ENCODE measurements at regions of chr14 and their contacts with region 1.

Region 1: DNA sequence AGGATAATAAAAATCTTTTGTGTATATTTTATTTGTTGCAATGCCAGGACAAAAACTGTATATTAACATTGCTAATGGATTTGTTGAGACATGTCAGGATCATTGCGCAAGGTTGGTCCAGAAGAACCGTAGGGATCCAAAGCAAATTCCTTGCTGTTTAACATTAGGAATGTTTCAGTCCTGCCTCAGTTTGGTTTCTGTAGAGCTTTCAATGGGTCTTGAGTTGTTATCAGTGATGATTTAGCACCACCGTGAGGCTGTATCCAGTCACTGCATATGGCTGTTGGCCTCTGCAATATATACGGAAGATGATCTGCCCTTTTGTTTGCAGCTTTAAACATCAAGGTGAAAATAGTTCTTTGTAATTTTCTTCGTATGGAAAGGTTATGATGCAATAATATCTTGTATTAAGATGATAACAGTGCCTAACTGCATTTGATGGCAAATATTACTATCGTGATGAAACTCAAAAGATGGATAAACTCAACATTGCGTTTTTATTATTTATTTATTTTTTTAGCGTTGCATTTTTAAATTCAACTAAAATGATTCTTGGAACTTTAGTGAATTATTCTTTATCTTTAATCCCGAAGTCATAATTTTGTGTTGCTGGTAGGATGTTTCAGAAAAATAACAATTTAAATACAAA is 231.2 kb downstream of the AKAP6 start:
- DNase-seq: peak; percentile 41
- CTCF ChIP-seq: peak; percentile 84

Region 2: GRCh38 chr14:32545506-32546210 is 14.7 kb before region 1 on chr14:
- CTCF ChIA-PET with region 1: interaction called, 23 read pairs
- POLR2A ChIA-PET with region 1: no interaction called
- DNase-seq: no peak
- CTCF ChIP-seq: no peak

Region 3: DNA sequence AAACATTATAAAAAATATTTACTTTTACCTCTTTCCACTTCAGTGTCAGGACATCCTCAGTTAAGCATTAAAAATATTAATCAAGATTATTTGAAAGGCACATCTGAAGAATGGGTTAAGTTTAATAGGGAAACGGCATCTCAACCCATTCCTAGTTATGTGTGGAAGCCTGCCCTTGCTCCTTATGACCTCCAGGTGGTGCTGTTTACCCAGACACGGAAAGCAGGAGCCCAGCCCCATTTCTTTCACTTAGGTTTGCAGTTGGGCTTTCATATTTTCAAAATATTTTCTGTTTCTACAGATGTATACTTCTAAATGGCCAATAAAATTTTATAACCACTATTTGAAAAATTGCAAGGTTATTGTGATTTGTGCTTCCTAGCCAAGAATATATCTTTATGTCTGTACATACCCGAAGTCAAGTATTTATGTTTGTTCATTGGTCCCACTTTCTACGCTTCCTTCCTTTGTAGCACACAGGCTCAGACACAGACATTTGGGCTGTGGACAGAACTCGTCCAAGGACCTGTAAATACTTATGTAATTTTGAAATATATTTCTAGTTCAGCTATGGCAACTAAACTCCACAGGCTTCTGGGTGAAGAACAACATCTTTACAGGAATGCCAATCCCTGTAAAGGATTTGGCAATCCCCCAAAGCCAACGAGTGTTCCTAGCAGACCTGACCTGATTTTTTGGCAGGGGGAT is 15.9 kb after region 1 on chr14:
- CTCF ChIA-PET with region 1: interaction called, 15 read pairs
- POLR2A ChIA-PET with region 1: no interaction called
- DNase-seq: peak; percentile 22
- CTCF ChIP-seq: peak; percentile 90

Region 4: DNA sequence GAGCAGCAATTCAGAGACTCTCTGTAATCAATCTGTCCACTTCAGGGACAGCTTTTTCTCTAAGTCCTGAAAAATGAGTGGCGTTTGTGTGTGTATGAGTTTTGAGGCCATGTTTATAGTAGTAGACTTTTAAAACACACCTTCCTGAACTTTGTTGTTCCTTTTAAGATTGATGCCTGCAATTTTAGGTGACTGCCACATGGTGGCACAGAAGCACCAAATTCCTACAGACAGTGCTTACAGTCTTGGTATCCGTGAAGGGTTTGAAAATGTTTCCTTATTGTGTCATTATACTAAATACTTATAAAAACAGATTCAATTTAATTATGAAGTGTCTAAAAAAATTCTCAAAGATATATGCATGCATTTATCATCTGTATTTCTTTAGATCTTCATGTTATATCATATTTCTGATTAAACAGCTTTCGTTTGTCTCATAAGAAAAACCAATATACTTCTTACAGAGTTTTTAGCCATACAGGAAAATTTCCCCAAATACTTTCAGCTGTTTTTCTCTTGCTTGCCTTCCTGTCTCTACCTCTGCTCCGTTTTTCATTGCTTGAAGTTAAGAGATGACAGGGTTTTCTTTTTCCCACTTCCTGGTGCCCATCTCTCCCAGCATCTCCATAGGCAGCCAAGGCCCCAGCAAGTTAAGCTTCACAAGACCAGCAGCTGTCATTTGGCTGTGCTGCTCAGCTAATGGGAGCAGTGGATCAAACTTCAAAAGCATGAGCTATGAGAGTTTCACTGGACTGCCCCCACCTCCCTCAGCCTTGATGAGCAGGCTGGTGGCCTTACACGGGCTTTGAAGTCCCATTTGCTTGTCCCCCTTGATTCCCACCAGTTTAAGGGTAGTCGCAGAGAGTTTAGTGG is 28.4 kb after region 1 on chr14:
- CTCF ChIA-PET with region 1: no interaction called
- POLR2A ChIA-PET with region 1: no interaction called
- DNase-seq: peak; percentile 36
- CTCF ChIP-seq: peak; percentile 48